Common myeloid progenitor, CD34-positive (primary cell): ENCODE measurements at regions of chr2 and their contacts with region 1.

Region 1: GRCh38 chr2:73985308-73986084 is 786 bp downstream of the TET3 start:
- DNase-seq: peak in 2 of 3 donors; percentile 38 to 58
- H3K4me3 ChIP-seq: peak overlapping the region; percentile 36 to 77 (median 73)
- H3K27ac ChIP-seq: peak overlapping the region in 1 of 2 experiments; percentile 74
- H3K4me1 ChIP-seq: peaks cover 23 to 74% (median 61%) of the 10 kb centered on the region in 4 experiments
- H3K27me3 ChIP-seq: no peaks in the 10 kb centered on the region

Region 2: GRCh38 chr2:73685770-73686438 is 299.6 kb before region 1 on chr2:
- CTCF ChIA-PET with region 1: no interaction called
- POLR2A ChIA-PET with region 1: no interaction called
- DNase-seq: no peak
- H3K4me3 ChIP-seq: no peak overlapping the region
- H3K27ac ChIP-seq: peak overlapping the region in 1 of 2 experiments; percentile 17
- H3K4me1 ChIP-seq: peaks cover 0 to 15% (median 11%) of the 10 kb centered on the region in 4 experiments
- H3K27me3 ChIP-seq: no peaks in the 10 kb centered on the region

Region 3: DNA sequence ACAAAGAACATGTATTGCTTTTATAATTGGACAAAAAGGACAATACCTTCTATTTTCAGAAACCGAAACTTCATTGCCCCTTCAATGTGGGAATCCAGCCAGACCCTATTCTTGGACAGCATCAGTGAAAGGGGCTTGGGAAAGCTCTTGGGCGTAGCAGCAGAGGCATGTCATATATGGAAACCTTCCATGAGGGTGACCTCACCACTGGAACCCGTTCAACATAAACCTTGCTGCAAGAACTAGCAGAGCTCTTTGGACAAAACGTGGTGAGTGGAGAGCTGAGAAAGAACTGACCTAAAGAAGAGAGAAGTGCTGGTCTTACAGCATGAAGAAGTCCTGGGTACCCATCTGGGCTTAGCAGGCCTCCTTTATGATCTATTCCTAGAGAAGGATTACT is 115.4 kb before region 1 on chr2:
- CTCF ChIA-PET with region 1: no interaction called
- POLR2A ChIA-PET with region 1: no interaction called
- DNase-seq: no peak
- H3K4me3 ChIP-seq: no peak overlapping the region
- H3K27ac ChIP-seq: no peak overlapping the region
- H3K4me1 ChIP-seq: no peaks in the 10 kb centered on the region
- H3K27me3 ChIP-seq: no peaks in the 10 kb centered on the region

Region 4: GRCh38 chr2:73939419-73939818 is 46.1 kb before region 1 on chr2:
- CTCF ChIA-PET with region 1: interaction called, 27 read pairs
- POLR2A ChIA-PET with region 1: no interaction called
- DNase-seq: peak; percentile 66 to 80 (median 76)
- H3K4me3 ChIP-seq: no peak overlapping the region
- H3K27ac ChIP-seq: no peak overlapping the region
- H3K4me1 ChIP-seq: peaks cover 0 to 4% (median 2%) of the 10 kb centered on the region in 4 experiments
- H3K27me3 ChIP-seq: no peaks in the 10 kb centered on the region

Region 5: GRCh38 chr2:73970850-73971471 is 14.5 kb before region 1 on chr2:
- CTCF ChIA-PET with region 1: interaction called, 19 read pairs
- POLR2A ChIA-PET with region 1: interaction called, 6 read pairs
- DNase-seq: peak; percentile 89 to 94 (median 93)
- H3K4me3 ChIP-seq: peak overlapping the region in 6 of 7 experiments; percentile 27 to 69 (median 44)
- H3K27ac ChIP-seq: peak overlapping the region; percentile 66 to 74
- H3K4me1 ChIP-seq: peaks cover 28 to 56% (median 51%) of the 10 kb centered on the region in 4 experiments
- H3K27me3 ChIP-seq: no peaks in the 10 kb centered on the region

Region 6: DNA sequence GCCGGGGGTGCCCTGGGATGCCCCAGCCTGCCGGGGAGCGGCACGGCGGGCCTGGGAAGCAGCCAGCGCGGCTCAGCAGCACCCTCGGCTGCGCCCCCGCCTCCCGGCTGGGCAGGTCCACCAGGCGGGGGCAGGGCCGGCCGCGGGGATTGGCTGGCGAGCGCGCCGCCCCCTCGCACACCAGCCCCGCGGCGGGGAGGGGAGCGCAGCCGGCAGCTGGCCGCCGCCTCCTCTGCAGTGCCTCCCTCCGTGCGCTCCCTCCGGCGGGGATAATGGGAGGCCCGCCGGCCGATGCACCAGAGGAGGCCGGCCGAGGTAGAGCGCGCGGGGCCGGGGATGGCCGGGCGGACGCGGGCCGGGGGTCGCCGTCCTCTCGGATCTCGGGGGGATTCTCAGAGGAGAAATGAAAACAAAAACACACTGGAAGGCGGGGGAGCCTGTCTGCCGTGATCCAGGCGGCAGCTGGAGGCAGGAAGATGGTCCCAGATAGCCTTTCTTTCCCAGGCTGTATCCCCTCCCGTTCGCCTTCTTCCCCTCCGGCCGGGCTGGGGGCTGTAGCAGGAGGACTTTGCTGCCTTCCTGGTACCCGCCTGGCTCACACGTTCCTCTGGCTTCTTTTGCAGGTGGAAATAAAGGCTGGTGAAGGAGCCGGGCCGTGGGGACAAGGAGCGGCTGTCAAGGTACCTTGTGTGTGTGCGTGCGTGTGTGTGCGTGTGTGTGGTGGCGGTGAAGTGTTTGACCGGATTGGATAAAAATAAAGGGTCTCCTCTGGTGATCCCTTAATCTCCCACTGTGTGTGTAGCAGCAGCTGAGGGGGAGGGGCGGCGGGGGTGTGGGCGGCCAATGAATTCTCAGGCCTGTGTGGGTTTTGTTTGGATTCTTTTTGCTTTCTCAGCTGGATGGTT is 17.2 kb after region 1 on chr2:
- CTCF ChIA-PET with region 1: interaction called, 22 read pairs
- POLR2A ChIA-PET with region 1: no interaction called
- DNase-seq: peak; percentile 69 to 85 (median 77)
- H3K4me3 ChIP-seq: peak overlapping the region; percentile 44 to 85 (median 65)
- H3K27ac ChIP-seq: no peak overlapping the region
- H3K4me1 ChIP-seq: peaks cover 0 to 26% (median 18%) of the 10 kb centered on the region in 4 experiments
- H3K27me3 ChIP-seq: no peaks in the 10 kb centered on the region